ENCODE measurements at regions of chr16 and their contacts with region 1.

Region 1: DNA sequence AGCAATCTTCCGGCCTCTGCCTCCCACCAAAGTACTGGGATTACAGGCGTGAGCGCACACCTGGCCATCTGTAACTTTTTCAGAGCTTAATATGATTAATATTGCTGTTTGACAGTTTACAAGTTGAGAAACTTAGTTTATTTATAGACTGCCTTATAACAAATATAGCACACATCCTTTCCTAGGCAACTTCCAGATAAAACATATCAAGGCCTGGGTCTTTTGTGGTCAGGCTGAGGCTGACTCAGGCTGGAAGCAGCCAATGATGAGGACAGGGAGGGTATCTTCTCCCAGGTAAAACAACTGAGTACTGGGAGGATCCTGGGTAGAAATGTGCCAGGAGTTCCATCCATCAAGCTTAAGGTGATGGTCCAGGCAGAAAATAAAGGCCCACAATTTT is 16.2 kb downstream of the LUC7L start:
- DNase-seq: no peak
- ATAC-seq: no peak
- H3K4me3 ChIP-seq: no peak overlapping the region
- H3K27ac ChIP-seq: no peak overlapping the region
- H3K4me1 ChIP-seq: no peaks in the 10 kb centered on the region
- H3K27me3 ChIP-seq: no peaks in the 10 kb centered on the region
- CTCF ChIP-seq: no peak

Region 2: DNA sequence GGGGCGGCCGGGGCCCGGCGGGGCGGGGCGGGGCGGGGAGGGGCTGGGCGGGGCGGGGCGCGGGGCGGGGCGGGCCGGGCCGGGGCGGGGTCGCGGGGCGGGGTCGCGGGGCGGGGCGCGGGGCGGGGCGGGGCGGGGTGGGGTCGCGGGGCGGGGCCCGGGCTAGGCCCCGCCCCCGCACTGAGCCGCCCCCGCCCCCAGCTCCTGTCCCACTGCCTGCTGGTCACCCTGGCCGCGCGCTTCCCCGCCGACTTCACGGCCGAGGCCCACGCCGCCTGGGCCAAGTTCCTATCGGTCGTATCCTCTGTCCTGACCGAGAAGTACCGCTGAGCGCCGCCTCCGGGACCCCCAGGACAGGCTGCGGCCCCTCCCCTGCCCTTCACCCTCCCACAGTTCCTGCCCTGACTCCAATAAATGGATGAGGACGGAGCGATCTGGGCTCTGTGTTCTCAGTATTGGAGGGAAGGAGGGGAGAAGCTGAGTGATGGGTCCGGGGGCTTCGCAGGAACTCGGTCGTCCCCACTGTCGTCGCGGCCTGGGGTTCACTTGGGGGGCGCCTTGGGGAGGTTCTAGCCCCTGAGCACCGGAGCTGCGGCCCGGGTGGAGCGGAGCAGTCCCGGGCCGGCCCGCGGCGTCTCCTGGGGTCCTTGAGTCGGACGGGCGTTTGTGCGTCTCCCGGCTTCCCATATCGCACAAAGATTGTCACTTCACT is 48.0 kb before region 1 on chr16:
- intact Hi-C with region 1: no loop called
- DNase-seq: no peak
- ATAC-seq: peak; percentile 39
- H3K4me3 ChIP-seq: no peak overlapping the region
- H3K27ac ChIP-seq: no peak overlapping the region
- H3K4me1 ChIP-seq: peaks cover 10 to 21% of the 10 kb centered on the region in 2 donors
- H3K27me3 ChIP-seq: peaks cover 36 to 77% of the 10 kb centered on the region in 2 donors
- CTCF ChIP-seq: no peak

Region 3: DNA sequence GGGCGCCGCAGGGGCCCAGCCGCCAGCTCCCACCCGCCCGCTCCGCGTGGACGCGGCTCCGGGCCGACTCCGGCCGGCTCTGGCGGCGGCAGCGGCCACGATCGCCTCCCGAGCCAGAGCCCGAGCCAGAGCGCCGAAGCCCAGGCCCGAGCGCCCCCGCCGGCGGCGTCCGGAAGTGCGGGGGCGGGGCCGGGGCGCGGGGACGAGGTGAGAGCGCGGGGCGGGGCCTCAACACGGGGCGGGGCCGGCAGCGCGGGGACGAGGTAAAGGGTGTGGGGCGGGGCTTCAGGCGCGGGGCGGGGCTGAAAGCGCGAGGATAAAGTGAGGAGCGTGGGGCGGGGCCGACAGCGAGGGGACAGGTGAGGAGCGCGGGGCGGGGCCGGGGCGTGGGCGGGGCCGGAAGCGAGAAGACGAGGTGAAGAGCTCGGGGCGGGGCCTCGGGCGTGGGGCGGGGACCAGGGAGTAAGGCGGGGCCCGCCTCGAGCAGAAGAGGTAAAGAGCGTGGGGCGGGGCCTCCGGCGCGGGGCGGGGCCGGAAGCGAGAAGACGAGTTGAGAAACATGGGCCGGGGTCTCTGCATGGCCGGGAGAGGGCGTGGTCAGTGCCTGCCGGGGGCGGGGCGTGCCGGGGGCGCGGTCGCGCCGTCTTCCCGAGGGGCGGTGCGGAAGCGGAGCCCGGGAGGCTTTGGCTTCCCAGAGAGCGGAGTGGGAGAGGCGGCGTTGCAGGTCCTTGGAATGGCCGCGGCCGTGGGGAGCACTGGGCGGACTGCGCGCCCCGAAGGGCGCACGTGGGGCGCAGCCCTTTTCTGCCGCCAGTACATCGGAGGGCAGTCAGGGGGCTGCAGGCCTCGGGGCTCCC is 139.8 kb after region 1 on chr16 and contains the start of gene AXIN1:
- intact Hi-C with region 1: loop called in 1 of 2 experiments (anchors 10 kb)
- DNase-seq: peak; percentile 87 to 100 (median 98)
- ATAC-seq: peak; percentile 94
- H3K4me3 ChIP-seq: peak within 1 kb of the TSS; percentile 61 to 70
- H3K27ac ChIP-seq: peak within 1 kb of the TSS; percentile 7 to 76
- H3K4me1 ChIP-seq: peaks cover 0 to 42% of the 10 kb centered on the region in 2 donors
- H3K27me3 ChIP-seq: no peaks in the 10 kb centered on the region
- CTCF ChIP-seq: peak; percentile 28 to 57
- polyA plus RNA-seq, gene AXIN1: 14.0 to 23.4 (median 17.5) TPM